ENCODE measurements at regions of chr1 and their contacts with region 1.

Region 1: DNA sequence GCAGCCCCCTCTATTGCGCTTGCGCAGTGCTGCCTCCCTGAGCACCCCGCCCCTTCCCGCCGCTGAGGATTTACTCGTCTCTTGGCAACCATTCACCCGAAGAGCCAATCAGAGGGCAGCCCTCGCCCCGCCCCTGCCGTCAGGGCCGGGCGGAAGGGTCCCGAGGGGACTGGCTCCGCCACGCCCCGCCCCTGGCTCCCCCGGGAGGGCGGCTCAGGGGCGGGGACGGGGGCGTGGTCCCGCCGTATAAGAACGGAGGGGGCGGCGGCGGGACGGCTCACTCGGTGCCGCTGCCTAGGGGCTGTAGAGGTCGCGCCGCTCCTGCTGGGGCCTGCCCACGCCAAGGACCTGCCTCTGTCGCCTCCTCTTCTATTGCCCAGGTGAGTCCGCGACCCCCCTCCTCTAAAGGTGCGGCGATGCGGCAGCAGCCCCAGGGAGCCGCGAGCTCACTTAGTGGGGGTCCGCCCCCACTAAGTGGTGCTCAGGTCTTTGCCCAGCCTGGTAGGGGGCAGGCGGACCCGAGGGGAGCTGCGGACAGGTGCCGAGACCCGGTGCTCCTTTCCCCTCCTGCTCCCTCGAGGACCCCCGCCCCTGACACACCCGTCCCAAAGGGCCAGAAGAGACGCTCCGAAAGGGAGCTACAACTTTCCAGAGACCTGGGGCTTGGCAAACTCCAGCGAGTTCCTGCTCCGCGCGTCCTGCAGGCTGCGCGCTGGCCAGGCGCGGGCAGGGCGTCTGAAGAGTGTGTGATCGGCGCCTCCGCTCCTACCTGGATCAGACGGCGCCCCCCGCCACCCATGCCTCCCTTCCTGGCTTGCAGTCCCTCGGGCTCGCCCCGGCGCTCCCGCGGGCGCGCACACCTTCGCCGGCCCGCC is at the start of gene TENT5C:
- DNase-seq: peak; percentile 96 to 98
- ATAC-seq: peak; percentile 81 to 83
- H3K4me3 ChIP-seq: peak within 1 kb of the TSS; percentile 67 to 98 (median 86)
- H3K27ac ChIP-seq: peak within 1 kb of the TSS; percentile 86 to 98 (median 96)
- H3K4me1 ChIP-seq: peaks cover 34 to 42% of the 10 kb centered on the region in 2 donors
- H3K27me3 ChIP-seq: no peaks in the 10 kb centered on the region
- CTCF ChIP-seq: peak in 3 of 5 experiments; percentile 3 to 21 (median 4)
- POLR2A ChIP-seq: peak; percentile 97 to 99
- total RNA-seq, gene TENT5C: 2.3 to 21.8 (median 6.4) TPM

Region 2: DNA sequence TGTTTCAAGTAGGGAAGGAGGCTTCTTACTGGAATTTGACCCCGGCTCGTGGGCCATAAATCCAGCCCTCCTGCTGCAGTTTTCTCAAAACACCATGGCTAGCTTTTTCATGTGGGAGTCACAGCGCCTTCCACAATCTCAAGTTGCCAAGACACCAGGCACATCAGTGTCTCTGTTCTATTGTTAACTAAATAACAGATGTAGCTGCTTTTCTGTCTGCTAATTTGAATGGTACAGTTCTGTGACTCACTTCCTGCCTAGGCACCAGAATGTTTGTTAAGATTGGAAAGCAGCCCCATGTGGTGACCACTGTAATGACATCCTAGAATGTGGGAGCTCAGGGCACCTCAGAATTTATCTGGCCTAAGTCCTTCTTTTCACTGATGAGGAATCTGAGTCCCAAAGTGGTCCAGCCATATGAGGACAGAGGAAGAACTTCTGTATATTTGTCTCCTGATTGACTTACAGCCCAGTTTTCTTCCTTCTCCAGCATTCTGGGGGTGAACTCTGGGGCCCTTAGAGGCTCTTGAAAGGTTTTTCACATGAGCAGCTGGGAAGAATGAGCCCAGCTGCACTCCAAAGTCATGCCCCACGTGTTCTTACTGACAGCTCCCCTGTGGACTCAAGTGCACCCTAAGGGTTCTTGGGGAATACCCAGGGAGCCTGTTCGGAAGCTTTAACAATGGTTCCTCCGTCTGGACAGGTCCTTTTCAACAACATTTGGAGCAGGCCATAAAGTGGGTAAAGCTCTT is 512.0 kb before region 1 on chr1:
- in situ Hi-C with region 1: no loop called
- intact Hi-C with region 1: loop called (anchors 10 kb)
- DNase-seq: no peak
- ATAC-seq: peak in 1 of 2 donors; percentile 37
- H3K4me3 ChIP-seq: no peak overlapping the region
- H3K27ac ChIP-seq: peak overlapping the region; percentile 93 to 96 (median 94)
- H3K4me1 ChIP-seq: peaks cover 27 to 56% of the 10 kb centered on the region in 2 donors
- H3K27me3 ChIP-seq: no peaks in the 10 kb centered on the region
- CTCF ChIP-seq: peak in 3 of 5 experiments; percentile 13 to 32 (median 26)
- POLR2A ChIP-seq: no peak

Region 3: DNA sequence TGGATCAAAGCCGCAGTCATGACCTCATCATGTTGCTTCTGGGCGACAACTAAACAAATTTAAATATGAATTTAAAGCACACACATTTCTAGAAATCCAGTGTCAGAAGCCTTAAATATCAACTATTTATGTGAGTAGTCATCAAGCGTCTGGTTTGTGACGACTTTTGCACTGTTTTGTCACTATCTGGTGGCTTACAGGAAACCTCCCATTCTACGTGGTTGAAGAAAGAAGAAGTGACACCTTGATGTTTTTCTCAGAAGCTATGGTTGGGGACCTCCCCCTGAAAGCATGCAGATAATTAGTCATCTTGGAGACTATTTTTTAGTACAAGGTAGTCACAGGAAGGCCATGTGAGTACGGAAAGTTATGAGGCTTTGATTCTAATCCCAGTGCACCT is 58.3 kb after region 1 on chr1:
- in situ Hi-C with region 1: no loop called
- intact Hi-C with region 1: no loop called
- DNase-seq: no peak
- ATAC-seq: no peak
- H3K4me3 ChIP-seq: no peak overlapping the region
- H3K27ac ChIP-seq: no peak overlapping the region
- H3K4me1 ChIP-seq: peaks cover 0 to 1% of the 10 kb centered on the region in 2 donors
- H3K27me3 ChIP-seq: no peaks in the 10 kb centered on the region
- CTCF ChIP-seq: no peak
- POLR2A ChIP-seq: no peak

Region 4: DNA sequence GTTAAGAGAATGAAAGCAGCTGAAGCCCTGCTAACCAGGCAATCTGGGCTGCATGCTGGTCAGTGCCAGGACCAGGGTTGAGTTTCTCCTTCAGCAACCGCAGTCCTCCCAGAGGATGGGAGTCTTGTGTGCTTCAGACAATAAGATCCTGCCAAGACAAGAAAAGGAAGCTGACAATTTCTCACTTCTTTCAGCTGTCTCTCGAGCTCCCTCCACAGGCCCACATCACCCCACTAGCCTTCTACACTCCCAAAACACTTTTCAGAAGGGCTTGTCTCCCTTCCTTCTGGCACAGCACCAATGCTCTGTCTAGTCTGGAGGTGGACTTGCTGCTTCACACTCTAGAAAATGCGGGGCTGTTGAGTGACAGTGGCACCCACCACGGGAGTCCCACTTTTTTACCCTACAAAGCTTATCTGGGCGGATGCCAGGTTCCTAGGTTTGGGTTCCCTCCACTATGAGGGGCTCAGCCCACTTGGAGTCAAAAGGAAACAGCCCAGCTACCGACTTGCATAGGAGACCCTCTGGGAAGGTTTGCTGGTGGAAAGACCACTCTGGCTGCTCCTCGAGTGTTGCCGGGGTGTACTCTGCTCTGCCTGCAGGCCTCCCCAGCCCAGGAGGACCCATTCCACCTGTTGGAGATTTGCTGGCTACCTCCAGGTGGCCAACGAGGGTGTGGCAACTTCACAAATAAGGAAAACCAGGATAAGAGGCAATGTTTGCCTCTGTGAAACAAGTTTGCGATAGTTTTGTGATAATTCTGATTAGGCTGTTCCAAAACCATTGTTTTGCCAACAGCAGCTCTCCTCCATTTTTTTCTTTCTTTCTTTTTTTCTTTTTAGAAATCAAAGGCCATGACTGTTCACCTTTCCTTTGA is 68.7 kb after region 1 on chr1:
- in situ Hi-C with region 1: loop called in 1 of 4 experiments (anchors 5 kb)
- intact Hi-C with region 1: loop called (anchors 2 kb)
- DNase-seq: peak in 1 of 2 donors; percentile 55
- ATAC-seq: peak; percentile 18 to 35
- H3K4me3 ChIP-seq: no peak overlapping the region
- H3K27ac ChIP-seq: peak overlapping the region; percentile 84 to 95 (median 94)
- H3K4me1 ChIP-seq: peaks cover 71 to 73% of the 10 kb centered on the region in 2 donors
- H3K27me3 ChIP-seq: no peaks in the 10 kb centered on the region
- CTCF ChIP-seq: peak in 3 of 5 experiments; percentile 12 to 34 (median 20)
- POLR2A ChIP-seq: no peak

Region 5: DNA sequence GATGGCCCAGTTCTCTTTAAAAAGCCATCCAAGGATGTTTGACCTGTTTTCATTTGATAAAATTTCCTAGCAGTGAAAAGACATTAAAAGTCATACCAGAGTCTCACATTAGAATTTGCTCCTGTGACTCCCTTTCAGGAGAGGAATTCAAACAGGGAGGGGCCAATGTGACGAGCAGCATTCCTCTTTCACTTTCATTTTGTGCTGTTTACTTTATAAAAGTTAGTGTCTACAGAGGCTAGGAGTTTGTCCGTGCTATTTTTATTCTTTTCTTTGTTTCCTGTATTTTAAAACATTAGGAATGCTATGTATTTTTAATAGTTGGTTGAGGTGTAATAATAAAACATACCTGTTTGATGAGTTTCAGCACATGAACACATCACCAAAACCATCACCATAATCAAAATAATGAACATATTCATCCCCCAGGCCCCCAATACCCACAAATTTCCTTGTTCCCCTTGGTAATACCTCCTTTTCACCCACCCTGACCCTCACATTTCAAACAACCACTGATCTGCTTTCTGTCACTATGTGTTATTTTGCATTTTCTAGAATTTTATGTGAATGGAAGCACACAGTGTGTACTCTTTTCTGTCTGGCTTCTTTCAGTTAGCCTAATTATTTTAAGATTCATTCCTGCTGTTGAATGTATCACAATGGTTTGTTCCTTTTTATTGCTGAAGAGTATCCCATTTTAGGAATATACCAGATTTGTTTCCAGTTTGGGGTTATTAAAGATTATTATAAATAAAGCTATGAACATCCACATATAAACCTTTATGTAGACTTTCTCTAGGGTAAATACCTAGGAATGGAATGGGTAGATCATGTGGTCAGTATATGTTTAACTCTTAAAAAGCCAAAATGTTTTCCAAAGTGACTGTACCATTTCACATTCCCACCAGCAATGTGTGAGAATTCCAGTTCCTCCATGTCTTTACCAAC is 129.3 kb after region 1 on chr1:
- in situ Hi-C with region 1: no loop called
- intact Hi-C with region 1: no loop called
- DNase-seq: no peak
- ATAC-seq: peak; percentile 50 to 81
- H3K4me3 ChIP-seq: peak overlapping the region; percentile 20 to 52 (median 34)
- H3K27ac ChIP-seq: peak overlapping the region; percentile 12 to 71 (median 60)
- H3K4me1 ChIP-seq: peaks cover 0 to 4% of the 10 kb centered on the region in 2 donors
- H3K27me3 ChIP-seq: no peaks in the 10 kb centered on the region
- CTCF ChIP-seq: no peak
- POLR2A ChIP-seq: no peak

Region 6: DNA sequence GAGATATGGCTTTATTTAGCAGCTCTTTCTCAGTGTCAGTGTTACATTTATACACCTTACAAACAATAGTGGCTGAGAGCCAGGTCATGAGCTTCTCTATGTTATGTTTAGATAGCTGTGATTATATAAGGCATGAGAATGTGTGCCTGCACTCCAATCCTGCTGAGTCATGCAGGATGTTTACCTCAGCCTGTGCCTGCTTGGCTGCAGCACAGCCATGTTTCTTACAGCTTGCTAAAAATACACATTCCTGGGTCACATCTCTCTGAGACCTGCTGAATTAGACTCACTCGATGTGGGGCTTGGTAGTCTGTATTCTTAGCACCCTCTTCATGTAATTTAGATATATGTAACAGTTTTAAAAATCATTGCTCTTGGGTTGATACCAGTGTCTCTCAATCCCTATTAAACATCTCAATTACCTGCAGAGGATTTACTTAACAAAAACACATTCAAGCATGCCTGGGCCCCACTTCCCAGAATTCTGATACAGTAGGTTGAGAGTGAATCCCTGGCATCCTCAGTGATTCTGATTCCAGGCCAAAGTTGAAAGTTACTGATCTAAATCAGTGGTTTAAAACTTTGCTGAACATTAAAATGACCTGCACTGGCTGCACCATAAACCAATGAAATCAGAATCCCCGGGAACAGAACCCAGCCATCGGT is 215.9 kb after region 1 on chr1:
- in situ Hi-C with region 1: no loop called
- intact Hi-C with region 1: loop called (anchors 5 kb)
- DNase-seq: peak; percentile 42 to 55
- ATAC-seq: peak; percentile 66 to 80
- H3K4me3 ChIP-seq: peak overlapping the region in 2 of 4 donors; percentile 6 to 20
- H3K27ac ChIP-seq: peak overlapping the region; percentile 85 to 90 (median 86)
- H3K4me1 ChIP-seq: peaks cover 26 to 28% of the 10 kb centered on the region in 2 donors
- H3K27me3 ChIP-seq: no peaks in the 10 kb centered on the region
- CTCF ChIP-seq: no peak
- POLR2A ChIP-seq: no peak

Region 7: DNA sequence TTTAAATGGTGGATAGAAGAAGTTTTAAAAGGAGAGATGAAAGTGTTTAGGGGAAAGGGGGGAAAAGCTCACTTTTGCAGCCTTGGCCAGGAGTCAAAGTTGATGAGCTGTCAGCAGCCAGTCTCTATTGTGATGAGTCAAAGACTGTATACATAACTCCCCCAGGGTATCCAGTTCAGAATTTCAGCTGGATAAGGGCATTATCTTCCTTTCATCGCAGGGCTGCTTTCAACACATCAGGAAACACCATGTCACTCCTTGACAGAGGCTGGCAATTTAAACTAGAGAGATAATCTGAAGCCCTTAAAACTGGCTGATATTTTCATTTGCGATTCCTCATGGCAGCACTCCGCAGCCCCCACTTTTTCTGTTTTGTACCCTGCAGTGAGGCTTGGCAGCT is 1053.6 kb after region 1 on chr1:
- in situ Hi-C with region 1: no loop called
- intact Hi-C with region 1: no loop called
- DNase-seq: no peak
- ATAC-seq: no peak
- H3K4me3 ChIP-seq: no peak overlapping the region
- H3K27ac ChIP-seq: no peak overlapping the region
- H3K4me1 ChIP-seq: peaks cover 0 to 5% of the 10 kb centered on the region in 2 donors
- H3K27me3 ChIP-seq: no peaks in the 10 kb centered on the region
- CTCF ChIP-seq: no peak
- POLR2A ChIP-seq: no peak